ENCODE measurements at regions of chr16 and their contacts with region 1.

Region 1: DNA sequence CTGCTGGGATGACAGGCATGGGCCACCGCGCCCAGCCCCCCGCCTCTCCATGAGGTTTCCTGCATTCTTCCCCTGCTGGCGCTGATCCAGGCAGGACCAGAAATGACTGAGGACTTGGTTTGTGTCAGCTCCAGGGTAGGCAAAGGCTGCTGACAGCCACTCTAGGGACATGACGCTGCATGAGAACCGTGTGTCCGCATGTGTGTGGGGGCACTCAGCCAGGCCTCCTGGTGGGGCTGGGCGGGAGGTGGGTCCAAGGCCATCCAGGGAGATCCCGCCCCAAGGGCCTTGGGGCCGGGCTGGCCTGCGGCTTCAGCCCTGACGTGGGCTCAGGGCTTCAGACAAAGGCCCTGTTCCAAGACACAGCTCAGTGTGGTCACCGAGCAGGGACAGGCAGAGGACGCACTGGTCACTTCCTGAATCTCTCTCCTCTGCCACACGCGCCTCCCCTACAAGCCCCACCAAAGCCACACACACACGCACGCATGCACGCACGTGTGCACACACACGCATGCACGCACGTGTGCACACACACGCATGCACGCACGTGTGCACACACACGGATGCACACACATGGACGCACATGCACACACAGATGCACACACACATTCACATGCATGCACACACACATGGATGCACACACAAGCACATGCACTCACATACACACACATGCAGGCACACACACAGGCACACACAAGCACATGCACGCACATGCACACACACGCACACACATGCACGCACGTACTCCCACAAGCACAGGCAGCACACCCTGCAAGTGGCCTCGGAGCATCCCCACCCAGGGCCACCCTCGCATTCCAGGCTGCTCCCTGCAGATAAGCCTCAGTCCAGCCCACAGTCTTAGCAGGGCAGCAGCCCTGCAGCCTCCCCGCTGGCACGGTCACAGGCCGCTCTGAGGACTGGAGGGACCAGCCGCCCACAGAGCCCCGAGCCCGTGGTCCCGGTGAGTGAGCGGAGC is 5.3 kb upstream of the TMEM204 start:
- DNase-seq: no peak
- ATAC-seq: no peak
- H3K4me3 ChIP-seq: no peak overlapping the region
- H3K4me3 Mint-ChIP-seq: peak overlapping the region; percentile 54 to 85 (median 79)
- H3K27ac ChIP-seq: peak overlapping the region; percentile 71
- H3K27ac Mint-ChIP-seq: peak overlapping the region; percentile 38 to 92 (median 87)
- H3K4me1 ChIP-seq: peaks cover 14 to 44% of the 10 kb centered on the region in 2 donors
- H3K4me1 Mint-ChIP-seq: peaks cover 17 to 57% (median 33%) of the 10 kb centered on the region in 7 donors
- H3K27me3 ChIP-seq: no peaks in the 10 kb centered on the region
- H3K27me3 Mint-ChIP-seq: no peaks in the 10 kb centered on the region

Region 2: DNA sequence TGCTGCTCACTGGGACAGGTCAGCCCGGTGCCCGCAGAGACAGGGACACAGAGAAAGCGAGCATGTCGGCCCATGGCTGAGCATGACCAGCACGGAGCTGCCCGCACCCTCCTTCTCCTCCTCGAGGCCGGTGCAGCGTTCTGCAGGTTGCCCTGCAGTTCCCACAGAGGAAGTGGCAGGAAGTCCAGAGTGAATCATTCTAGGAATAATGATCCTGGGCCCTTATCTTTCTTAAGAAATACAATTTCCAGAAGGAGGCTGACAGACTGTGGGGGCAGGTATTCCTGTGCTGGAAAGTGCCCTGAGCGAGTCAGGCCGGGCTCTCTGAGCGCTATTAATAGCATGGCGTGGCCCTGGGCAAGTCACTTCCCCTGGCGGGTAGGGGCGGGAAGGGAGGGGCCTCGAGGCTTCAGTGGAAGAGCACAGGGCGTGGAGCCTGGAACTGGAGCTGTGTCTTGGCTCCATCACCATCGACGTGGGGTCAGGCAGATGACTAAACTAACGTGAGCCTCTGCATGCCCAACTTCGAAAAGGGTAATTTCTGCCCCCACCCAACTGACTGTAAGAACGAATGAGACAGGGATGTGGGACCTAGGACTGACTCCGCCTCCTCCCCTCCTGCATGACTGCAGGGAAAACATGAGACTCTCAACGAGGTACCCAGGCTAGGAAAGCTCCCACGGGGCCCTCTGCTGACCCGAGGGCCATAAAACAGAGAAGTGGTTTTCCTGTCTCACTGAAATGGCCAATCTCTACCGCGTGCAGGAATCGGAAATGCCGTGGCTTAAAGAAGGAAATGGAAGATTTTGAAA is 15.2 kb after region 1 on chr16:
- CTCF ChIA-PET with region 1: interaction called, 4 read pairs
- POLR2A ChIA-PET with region 1: interaction called, 15 read pairs
- intact Hi-C with region 1: loop called (anchors 1 kb)
- DNase-seq: peak in 5 of 9 donors; percentile 23 to 59 (median 38)
- ATAC-seq: peak; percentile 81
- H3K4me3 ChIP-seq: no peak overlapping the region
- H3K4me3 Mint-ChIP-seq: peak overlapping the region; percentile 70 to 86 (median 76)
- H3K27ac ChIP-seq: peak overlapping the region; percentile 51
- H3K27ac Mint-ChIP-seq: peak overlapping the region; percentile 71 to 95 (median 86)
- H3K4me1 ChIP-seq: peaks cover 13 to 70% of the 10 kb centered on the region in 2 donors
- H3K4me1 Mint-ChIP-seq: peaks cover 51 to 89% (median 66%) of the 10 kb centered on the region in 7 donors
- H3K27me3 ChIP-seq: no peaks in the 10 kb centered on the region
- H3K27me3 Mint-ChIP-seq: no peaks in the 10 kb centered on the region

Region 3: GRCh38 chr16:1667251-1667650 is 139.1 kb after region 1 on chr16:
- CTCF ChIA-PET with region 1: no interaction called
- POLR2A ChIA-PET with region 1: no interaction called
- intact Hi-C with region 1: no loop called
- DNase-seq: no peak
- ATAC-seq: no peak
- H3K4me3 ChIP-seq: no peak overlapping the region
- H3K4me3 Mint-ChIP-seq: no peak overlapping the region
- H3K27ac ChIP-seq: no peak overlapping the region
- H3K27ac Mint-ChIP-seq: peak overlapping the region in 1 of 9 donors; percentile 24
- H3K4me1 ChIP-seq: no peaks in the 10 kb centered on the region
- H3K4me1 Mint-ChIP-seq: no peaks in the 10 kb centered on the region
- H3K27me3 ChIP-seq: no peaks in the 10 kb centered on the region
- H3K27me3 Mint-ChIP-seq: no peaks in the 10 kb centered on the region

Region 4: GRCh38 chr16:1677802-1678496 is 149.8 kb after region 1 on chr16 and contains the start of gene JPT2:
- CTCF ChIA-PET with region 1: no interaction called
- POLR2A ChIA-PET with region 1: interaction called, 3 read pairs
- intact Hi-C with region 1: loop called in 1 of 2 experiments (anchors 1 kb)
- DNase-seq: peak; percentile 89 to 97 (median 94)
- ATAC-seq: peak; percentile 98
- H3K4me3 ChIP-seq: peak within 1 kb of the TSS; percentile 59
- H3K4me3 Mint-ChIP-seq: peak within 1 kb of the TSS; percentile 81 to 90 (median 88)
- H3K27ac ChIP-seq: peak within 1 kb of the TSS; percentile 78
- H3K27ac Mint-ChIP-seq: peak within 1 kb of the TSS; percentile 64 to 91 (median 78)
- H3K4me1 ChIP-seq: no peaks in the 10 kb centered on the region
- H3K4me1 Mint-ChIP-seq: peaks cover 24 to 42% (median 36%) of the 10 kb centered on the region in 7 donors
- H3K27me3 ChIP-seq: no peaks in the 10 kb centered on the region
- H3K27me3 Mint-ChIP-seq: no peaks in the 10 kb centered on the region
- total RNA-seq, gene JPT2: 12.6 to 67.2 (median 36.4) TPM

Region 5: GRCh38 chr16:1723450-1724147 is 195.5 kb after region 1 on chr16:
- CTCF ChIA-PET with region 1: no interaction called
- POLR2A ChIA-PET with region 1: no interaction called
- intact Hi-C with region 1: loop called in 1 of 2 experiments (anchors 1 kb)
- DNase-seq: peak in 7 of 9 donors; percentile 14 to 48 (median 39)
- ATAC-seq: peak; percentile 64
- H3K4me3 ChIP-seq: no peak overlapping the region
- H3K4me3 Mint-ChIP-seq: peak overlapping the region in 5 of 10 donors; percentile 13 to 57 (median 37)
- H3K27ac ChIP-seq: peak overlapping the region; percentile 4
- H3K27ac Mint-ChIP-seq: peak overlapping the region in 8 of 9 donors; percentile 32 to 74 (median 55)
- H3K4me1 ChIP-seq: peaks cover 17 to 28% of the 10 kb centered on the region in 2 donors
- H3K4me1 Mint-ChIP-seq: peaks cover 29 to 53% (median 44%) of the 10 kb centered on the region in 7 donors
- H3K27me3 ChIP-seq: no peaks in the 10 kb centered on the region
- H3K27me3 Mint-ChIP-seq: no peaks in the 10 kb centered on the region

Region 6: GRCh38 chr16:1929578-1930337 is 401.6 kb after region 1 on chr16:
- CTCF ChIA-PET with region 1: no interaction called
- POLR2A ChIA-PET with region 1: no interaction called
- intact Hi-C with region 1: loop called in 1 of 2 experiments (anchors 10 kb)
- DNase-seq: peak; percentile 83 to 99 (median 91)
- ATAC-seq: peak; percentile 100
- H3K4me3 ChIP-seq: peak overlapping the region; percentile 48
- H3K4me3 Mint-ChIP-seq: peak overlapping the region in 6 of 10 donors; percentile 30 to 82 (median 74)
- H3K27ac ChIP-seq: peak overlapping the region; percentile 64
- H3K27ac Mint-ChIP-seq: no peak overlapping the region
- H3K4me1 ChIP-seq: no peaks in the 10 kb centered on the region
- H3K4me1 Mint-ChIP-seq: peaks cover 2 to 8% (median 4%) of the 10 kb centered on the region in 7 donors
- H3K27me3 ChIP-seq: no peaks in the 10 kb centered on the region
- H3K27me3 Mint-ChIP-seq: peaks cover 0 to 3% (median 2%) of the 10 kb centered on the region in 5 donors